WTC11 (cell line): ENCODE measurements at regions of chr6 and their contacts with region 1.

Region 1: GRCh38 chr6:70955441-70956190 is 1.2 kb downstream of the B3GAT2 start:
- DNase-seq: peak; percentile 97
- ATAC-seq: peak; percentile 84
- H3K4me3 Mint-ChIP-seq: peak overlapping the region; percentile 80
- H3K27ac Mint-ChIP-seq: no peak overlapping the region
- H3K4me1 Mint-ChIP-seq: peaks cover 26% of the 10 kb centered on the region
- H3K27me3 Mint-ChIP-seq: peaks cover 70% of the 10 kb centered on the region
- CTCF ChIP-seq: peak; percentile 82

Region 2: GRCh38 chr6:70520575-70520974 is 435.0 kb before region 1 on chr6:
- CTCF ChIA-PET with region 1: interaction called, 29 read pairs
- POLR2A ChIA-PET with region 1: no interaction called
- DNase-seq: no peak
- ATAC-seq: no peak; the same call in 1 of the 2 replicates
- H3K4me3 Mint-ChIP-seq: no peak overlapping the region
- H3K27ac Mint-ChIP-seq: no peak overlapping the region
- H3K4me1 Mint-ChIP-seq: peaks cover 5% of the 10 kb centered on the region; the same call in 1 of the 2 replicates
- H3K27me3 Mint-ChIP-seq: no peaks in the 10 kb centered on the region
- CTCF ChIP-seq: no peak

Region 3: GRCh38 chr6:70725817-70726415 is 229.7 kb before region 1 on chr6:
- CTCF ChIA-PET with region 1: interaction called, 12 read pairs
- POLR2A ChIA-PET with region 1: no interaction called
- DNase-seq: no peak
- ATAC-seq: peak; percentile 76
- H3K4me3 Mint-ChIP-seq: no peak overlapping the region
- H3K27ac Mint-ChIP-seq: peak overlapping the region; percentile 95
- H3K4me1 Mint-ChIP-seq: peaks cover 46% of the 10 kb centered on the region
- H3K27me3 Mint-ChIP-seq: no peaks in the 10 kb centered on the region
- CTCF ChIP-seq: no peak

Region 4: GRCh38 chr6:70884074-70884983 is 71.3 kb before region 1 on chr6:
- CTCF ChIA-PET with region 1: interaction called, 40 read pairs
- POLR2A ChIA-PET with region 1: interaction called, 3 read pairs
- DNase-seq: peak; percentile 71
- ATAC-seq: peak; percentile 88
- H3K4me3 Mint-ChIP-seq: no peak overlapping the region
- H3K27ac Mint-ChIP-seq: no peak overlapping the region; the same call in 1 of the 2 replicates
- H3K4me1 Mint-ChIP-seq: peaks cover 36% of the 10 kb centered on the region
- H3K27me3 Mint-ChIP-seq: no peaks in the 10 kb centered on the region; the same call in 1 of the 2 replicates
- CTCF ChIP-seq: peak; percentile 85

Region 5: DNA sequence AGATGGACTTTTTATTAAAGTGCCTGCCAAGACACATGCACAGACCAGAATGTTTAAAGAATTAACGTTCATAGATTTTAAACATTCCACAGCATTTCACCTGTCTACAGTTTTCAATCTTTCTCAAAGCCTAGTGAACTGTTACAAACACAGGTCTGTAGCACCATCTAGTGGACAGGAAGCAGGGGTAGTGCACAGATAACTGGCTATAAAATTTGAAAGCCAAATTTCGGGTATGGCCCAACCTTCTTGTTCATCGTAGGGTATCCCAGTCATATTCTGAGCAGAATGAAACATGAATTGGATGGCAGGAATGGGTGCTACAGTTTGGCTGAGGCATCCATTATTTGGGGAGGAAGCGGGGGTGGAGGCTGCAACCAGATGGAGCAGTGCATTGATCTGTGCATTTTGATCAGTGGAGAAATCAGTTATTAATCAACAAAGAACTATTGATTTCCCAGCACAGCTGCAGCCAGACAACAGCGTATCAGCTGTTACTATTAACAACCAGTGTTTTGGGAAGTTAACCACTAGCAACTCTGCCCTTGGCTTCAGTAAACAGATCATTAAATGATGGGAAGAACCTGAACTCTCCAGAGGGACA is 57.4 kb after region 1 on chr6:
- CTCF ChIA-PET with region 1: interaction called, 13 read pairs
- POLR2A ChIA-PET with region 1: no interaction called
- DNase-seq: no peak
- ATAC-seq: peak; percentile 85
- H3K4me3 Mint-ChIP-seq: no peak overlapping the region
- H3K27ac Mint-ChIP-seq: no peak overlapping the region
- H3K4me1 Mint-ChIP-seq: peaks cover 28% of the 10 kb centered on the region
- H3K27me3 Mint-ChIP-seq: no peaks in the 10 kb centered on the region; the same call in 1 of the 2 replicates
- CTCF ChIP-seq: peak; percentile 75

Region 6: GRCh38 chr6:71067816-71068215 is 112.2 kb after region 1 on chr6:
- CTCF ChIA-PET with region 1: no interaction called
- POLR2A ChIA-PET with region 1: no interaction called
- DNase-seq: no peak
- ATAC-seq: no peak
- H3K4me3 Mint-ChIP-seq: no peak overlapping the region
- H3K27ac Mint-ChIP-seq: no peak overlapping the region
- H3K4me1 Mint-ChIP-seq: no peaks in the 10 kb centered on the region
- H3K27me3 Mint-ChIP-seq: no peaks in the 10 kb centered on the region
- CTCF ChIP-seq: no peak